PC-3 (cell line): ENCODE measurements at regions of chr1 and their contacts with region 1.

Region 1: DNA sequence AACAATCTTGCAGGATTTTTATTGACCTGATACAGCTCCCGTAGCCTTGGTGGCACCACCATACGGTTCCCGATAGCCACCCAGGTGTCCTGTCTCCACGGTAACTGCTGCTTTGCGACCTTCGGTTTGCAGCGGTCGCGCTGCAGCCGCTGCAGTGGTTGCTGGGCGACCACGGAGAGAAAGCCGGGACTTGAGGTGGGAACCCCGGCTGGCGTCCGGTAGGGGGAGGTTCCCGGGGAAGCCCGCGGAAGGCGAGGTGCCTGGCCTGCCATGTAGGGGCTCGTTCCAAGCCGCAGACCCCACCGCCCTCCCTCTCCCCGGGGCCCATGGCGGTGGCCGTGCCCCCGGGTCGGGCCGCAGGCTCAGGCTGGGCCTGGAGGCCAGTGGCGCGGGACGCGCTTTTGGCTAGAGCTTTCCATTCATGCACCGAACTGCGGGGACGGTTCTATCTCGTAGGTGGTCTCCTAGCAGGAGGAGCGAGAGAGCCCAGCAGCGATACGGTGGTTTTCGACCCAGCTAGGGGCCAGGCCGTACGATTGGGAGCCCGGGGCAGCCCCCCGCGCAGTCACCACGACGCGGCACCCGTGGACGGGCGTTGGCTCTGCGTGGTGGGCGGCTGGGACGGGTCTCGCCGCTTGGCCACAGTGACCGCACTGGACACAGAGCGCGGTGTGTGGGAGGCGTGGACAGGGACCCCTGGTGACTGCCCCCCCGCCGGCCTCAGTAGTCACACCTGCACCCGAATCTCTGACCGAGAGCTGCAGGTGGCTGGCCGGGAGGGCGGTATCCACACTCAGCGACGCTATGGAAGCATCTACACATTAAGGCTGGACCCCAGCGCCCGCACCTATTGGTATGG is at the start of gene KLHDC9:
- DNase-seq: peak; percentile 96
- ATAC-seq: peak; percentile 83
- H3K4me3 ChIP-seq: peak within 1 kb of the TSS; percentile 74
- H3K27ac ChIP-seq: peak within 1 kb of the TSS; percentile 15
- H3K4me1 ChIP-seq: peaks cover 24% of the 10 kb centered on the region
- H3K27me3 ChIP-seq: no peaks in the 10 kb centered on the region
- CTCF ChIP-seq: no peak
- total RNA-seq, gene KLHDC9: 3.2 and 3.3 TPM in 2 replicates

Region 2: DNA sequence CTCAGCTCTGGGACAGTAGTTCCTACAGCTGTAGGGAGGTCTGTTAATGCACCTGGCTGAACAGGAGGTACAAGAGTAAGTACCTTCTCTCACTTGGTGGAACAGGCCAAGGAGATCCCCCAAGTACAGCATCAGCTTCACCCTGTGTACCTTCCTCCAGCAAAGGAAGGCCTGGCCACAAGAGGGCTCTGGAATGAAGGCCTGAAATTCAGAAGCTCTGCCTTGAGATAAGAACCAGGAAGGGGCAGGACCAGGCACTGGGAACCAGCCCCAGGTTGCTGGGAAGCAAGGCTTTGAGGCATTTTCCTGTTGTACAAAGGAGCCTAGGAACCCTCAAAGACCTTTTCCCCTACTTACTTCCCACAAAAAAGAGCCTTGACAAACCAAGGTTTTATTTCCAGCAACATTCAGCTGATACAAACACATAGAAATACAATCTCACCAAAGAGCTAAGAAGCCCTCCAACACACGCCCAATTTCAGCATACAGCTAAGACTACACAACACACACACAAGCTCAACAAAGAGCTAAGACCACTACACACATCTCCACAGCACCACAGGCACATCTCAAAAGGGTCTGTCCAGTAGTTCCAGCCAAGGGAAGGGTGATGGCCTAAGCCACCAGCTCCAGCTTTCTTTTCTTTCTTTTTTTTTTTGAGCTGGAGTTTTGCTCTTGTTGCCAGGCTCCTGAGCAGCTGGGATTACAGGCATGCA is 101.0 kb before region 1 on chr1:
- CTCF ChIA-PET with region 1: interaction called, 16 read pairs
- POLR2A ChIA-PET with region 1: no interaction called
- intact Hi-C with region 1: loop called (anchors 1 kb)
- DNase-seq: peak; percentile 74
- ATAC-seq: peak; percentile 73
- H3K4me3 ChIP-seq: no peak overlapping the region
- H3K27ac ChIP-seq: peak overlapping the region; percentile 85
- H3K4me1 ChIP-seq: peaks cover 33% of the 10 kb centered on the region
- H3K27me3 ChIP-seq: no peaks in the 10 kb centered on the region
- CTCF ChIP-seq: peak; percentile 82

Region 3: GRCh38 chr1:161071886-161072371 is 26.5 kb before region 1 on chr1:
- CTCF ChIA-PET with region 1: interaction called, 4 read pairs
- POLR2A ChIA-PET with region 1: no interaction called
- intact Hi-C with region 1: loop called (anchors 1 kb)
- DNase-seq: peak; percentile 70
- ATAC-seq: peak; percentile 56
- H3K4me3 ChIP-seq: no peak overlapping the region
- H3K27ac ChIP-seq: no peak overlapping the region
- H3K4me1 ChIP-seq: no peaks in the 10 kb centered on the region
- H3K27me3 ChIP-seq: no peaks in the 10 kb centered on the region
- CTCF ChIP-seq: peak; percentile 74

Region 4: DNA sequence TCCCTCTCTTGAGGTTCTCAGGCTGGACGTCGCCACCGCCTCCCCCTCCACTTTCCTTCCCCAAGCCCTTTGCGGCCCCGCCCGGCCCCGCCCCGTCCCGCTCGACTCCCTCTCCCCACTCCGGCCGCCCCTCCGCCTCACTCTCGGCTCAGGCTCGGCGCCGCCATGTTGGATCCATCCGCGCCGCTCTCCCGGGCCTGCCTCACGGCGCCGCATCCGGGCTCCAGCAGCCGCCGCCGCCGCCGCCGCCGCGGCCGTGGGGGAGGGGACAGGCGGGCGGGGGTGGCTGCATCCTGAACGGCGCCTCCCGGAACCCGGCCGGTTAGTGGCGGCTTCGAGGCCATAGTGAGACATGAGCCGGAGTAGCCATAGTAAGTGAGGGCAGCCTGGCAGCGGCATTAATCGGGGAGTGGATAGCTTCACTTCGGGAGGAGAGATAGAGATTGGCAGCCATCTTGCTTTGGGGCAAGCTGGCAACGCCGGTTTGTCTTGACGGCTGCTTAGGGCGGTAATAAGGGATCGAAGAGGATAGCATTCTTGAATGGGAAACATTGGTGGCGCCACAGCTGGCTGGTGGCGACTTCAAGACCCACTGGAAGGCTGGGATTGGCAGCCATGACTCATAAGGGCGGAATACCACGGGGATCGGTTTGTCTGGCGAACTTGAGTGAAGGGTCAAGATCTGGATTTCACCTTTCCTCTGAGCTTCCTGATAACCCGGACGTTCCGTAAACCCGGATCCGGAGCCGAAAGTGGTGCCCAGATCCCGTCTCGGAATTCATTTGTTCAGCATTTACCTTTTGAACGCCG is 34.2 kb after region 1 on chr1 and contains the start of gene DEDD:
- CTCF ChIA-PET with region 1: no interaction called
- POLR2A ChIA-PET with region 1: no interaction called
- intact Hi-C with region 1: loop called (anchors 2 kb)
- DNase-seq: peak; percentile 97
- ATAC-seq: peak; percentile 84
- H3K4me3 ChIP-seq: peak within 1 kb of the TSS; percentile 90
- H3K27ac ChIP-seq: peak within 1 kb of the TSS; percentile 91
- H3K4me1 ChIP-seq: peaks cover 18% of the 10 kb centered on the region
- H3K27me3 ChIP-seq: no peaks in the 10 kb centered on the region
- CTCF ChIP-seq: 0 out of 2 replicates have a peak, but pooled peaks have one; percentile 39
- total RNA-seq, gene DEDD: 23.4 and 39.2 TPM in 2 replicates

Region 5: DNA sequence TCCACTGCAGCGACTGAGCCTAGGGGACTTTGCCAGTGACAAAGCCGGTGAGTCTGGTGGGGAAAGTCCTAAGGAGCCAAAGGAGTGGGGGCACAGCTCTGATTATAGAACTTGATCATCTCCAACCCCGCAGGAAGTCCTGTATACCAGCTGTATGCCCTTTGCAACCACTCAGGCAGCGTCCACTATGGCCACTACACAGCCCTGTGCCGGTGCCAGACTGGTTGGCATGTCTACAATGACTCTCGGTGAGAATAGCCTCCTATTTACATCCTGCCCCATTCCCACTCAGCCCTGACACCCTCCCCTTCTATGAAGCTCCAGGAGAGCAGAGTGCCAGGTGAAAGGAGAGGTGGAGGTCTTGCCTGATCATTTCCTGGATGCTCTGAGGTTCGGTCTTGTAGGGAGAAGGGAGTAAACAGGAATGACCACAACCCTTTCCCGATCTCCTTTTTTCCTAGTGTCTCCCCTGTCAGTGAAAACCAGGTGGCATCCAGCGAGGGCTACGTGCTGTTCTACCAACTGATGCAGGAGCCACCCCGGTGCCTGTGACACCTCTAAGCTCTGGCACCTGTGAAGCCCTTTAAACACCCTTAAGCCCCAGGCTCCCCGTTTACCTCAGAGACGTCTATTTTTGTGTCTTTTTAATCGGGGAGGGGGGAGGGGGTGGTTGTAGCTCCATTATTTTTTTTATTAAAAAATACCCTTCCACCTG is 66.6 kb after region 1 on chr1:
- CTCF ChIA-PET with region 1: no interaction called
- POLR2A ChIA-PET with region 1: interaction called, 27 read pairs
- intact Hi-C with region 1: no loop called
- DNase-seq: no peak
- ATAC-seq: no peak
- H3K4me3 ChIP-seq: peak overlapping the region; percentile 75
- H3K27ac ChIP-seq: peak overlapping the region; percentile 70
- H3K4me1 ChIP-seq: peaks cover 28% of the 10 kb centered on the region
- H3K27me3 ChIP-seq: no peaks in the 10 kb centered on the region
- CTCF ChIP-seq: no peak